GM10248 (cell line): ENCODE measurements at regions of chr1 and their contacts with region 1.

Region 1: GRCh38 chr1:159071970-159072582 is 4.5 kb downstream of the AIM2 start:
- DNase-seq: peak; percentile 34
- CTCF ChIP-seq: peak; percentile 55

Region 2: GRCh38 chr1:158506369-158506987 is 565.6 kb before region 1 on chr1:
- CTCF ChIA-PET with region 1: interaction called, 30 read pairs
- POLR2A ChIA-PET with region 1: no interaction called
- DNase-seq: peak; percentile 19
- CTCF ChIP-seq: peak; percentile 60

Region 3: GRCh38 chr1:159009704-159010361 is 62.2 kb before region 1 on chr1 and contains the start of gene IFI16:
- CTCF ChIA-PET with region 1: interaction called, 10 read pairs
- POLR2A ChIA-PET with region 1: no interaction called
- DNase-seq: peak; percentile 53
- CTCF ChIP-seq: no peak

Region 4: GRCh38 chr1:159030877-159031447 is 41.1 kb before region 1 on chr1:
- CTCF ChIA-PET with region 1: interaction called, 13 read pairs
- POLR2A ChIA-PET with region 1: no interaction called
- DNase-seq: no peak
- CTCF ChIP-seq: no peak

Region 5: GRCh38 chr1:159040206-159040605 is 31.9 kb before region 1 on chr1:
- CTCF ChIA-PET with region 1: interaction called, 13 read pairs
- POLR2A ChIA-PET with region 1: no interaction called
- DNase-seq: no peak
- CTCF ChIP-seq: no peak

Region 6: GRCh38 chr1:159054427-159054826 is 17.6 kb before region 1 on chr1:
- CTCF ChIA-PET with region 1: interaction called, 12 read pairs
- POLR2A ChIA-PET with region 1: no interaction called
- DNase-seq: no peak
- CTCF ChIP-seq: no peak

Region 7: GRCh38 chr1:159084152-159084551 is 12.1 kb after region 1 on chr1:
- CTCF ChIA-PET with region 1: interaction called, 19 read pairs
- POLR2A ChIA-PET with region 1: no interaction called
- DNase-seq: no peak
- CTCF ChIP-seq: no peak